ENCODE measurements at regions of chr3 and their contacts with region 1.

Region 1: GRCh38 chr3:171334465-171334811 is 125.8 kb downstream of the TNIK start:
- H3K4me3 Mint-ChIP-seq: no peak overlapping the region
- H3K27ac Mint-ChIP-seq: peak overlapping the region; percentile 34
- H3K4me1 Mint-ChIP-seq: peaks cover 13% of the 10 kb centered on the region
- H3K27me3 Mint-ChIP-seq: peaks cover 4% of the 10 kb centered on the region

Region 2: GRCh38 chr3:171383206-171384018 is 49.0 kb after region 1 on chr3:
- intact Hi-C with region 1: loop called (anchors 5 kb)
- H3K4me3 Mint-ChIP-seq: no peak overlapping the region
- H3K27ac Mint-ChIP-seq: no peak overlapping the region
- H3K4me1 Mint-ChIP-seq: peaks cover 16% of the 10 kb centered on the region
- H3K27me3 Mint-ChIP-seq: no peaks in the 10 kb centered on the region

Measured in dendritic cell treated with granulocyte-macrophage colony-stimulating factor and Interleukin-4, amounts not matched to agents 40 ng/mL and 50 ng/mL, for 4 days (primary cell).